Activated naive CD4-positive, alpha-beta T cell treated with anti-CD3 and anti-CD28 coated beads for 36 hours (primary cell): ENCODE measurements at regions of chr15 and their contacts with region 1.

Region 1: GRCh38 chr15:64893481-64894394 is 18.0 kb upstream of the ANKDD1A start:
- DNase-seq: peak; percentile 99
- H3K4me3 Mint-ChIP-seq: peak overlapping the region; percentile 98
- H3K27ac Mint-ChIP-seq: peak overlapping the region; percentile 99
- H3K4me1 Mint-ChIP-seq: peaks cover 62% of the 10 kb centered on the region
- H3K27me3 Mint-ChIP-seq: no peaks in the 10 kb centered on the region

Region 2: GRCh38 chr15:64093627-64094417 is 799.9 kb before region 1 on chr15 and contains the start of gene CIAO2A:
- CTCF ChIA-PET with region 1: no interaction called
- intact Hi-C with region 1: loop called (anchors 5 kb)
- DNase-seq: peak; percentile 99
- H3K4me3 Mint-ChIP-seq: peak within 1 kb of the TSS; percentile 98
- H3K27ac Mint-ChIP-seq: peak within 1 kb of the TSS; percentile 97
- H3K4me1 Mint-ChIP-seq: peaks cover 62% of the 10 kb centered on the region
- H3K27me3 Mint-ChIP-seq: no peaks in the 10 kb centered on the region
- total RNA-seq, gene CIAO2A: 105 TPM

Region 3: DNA sequence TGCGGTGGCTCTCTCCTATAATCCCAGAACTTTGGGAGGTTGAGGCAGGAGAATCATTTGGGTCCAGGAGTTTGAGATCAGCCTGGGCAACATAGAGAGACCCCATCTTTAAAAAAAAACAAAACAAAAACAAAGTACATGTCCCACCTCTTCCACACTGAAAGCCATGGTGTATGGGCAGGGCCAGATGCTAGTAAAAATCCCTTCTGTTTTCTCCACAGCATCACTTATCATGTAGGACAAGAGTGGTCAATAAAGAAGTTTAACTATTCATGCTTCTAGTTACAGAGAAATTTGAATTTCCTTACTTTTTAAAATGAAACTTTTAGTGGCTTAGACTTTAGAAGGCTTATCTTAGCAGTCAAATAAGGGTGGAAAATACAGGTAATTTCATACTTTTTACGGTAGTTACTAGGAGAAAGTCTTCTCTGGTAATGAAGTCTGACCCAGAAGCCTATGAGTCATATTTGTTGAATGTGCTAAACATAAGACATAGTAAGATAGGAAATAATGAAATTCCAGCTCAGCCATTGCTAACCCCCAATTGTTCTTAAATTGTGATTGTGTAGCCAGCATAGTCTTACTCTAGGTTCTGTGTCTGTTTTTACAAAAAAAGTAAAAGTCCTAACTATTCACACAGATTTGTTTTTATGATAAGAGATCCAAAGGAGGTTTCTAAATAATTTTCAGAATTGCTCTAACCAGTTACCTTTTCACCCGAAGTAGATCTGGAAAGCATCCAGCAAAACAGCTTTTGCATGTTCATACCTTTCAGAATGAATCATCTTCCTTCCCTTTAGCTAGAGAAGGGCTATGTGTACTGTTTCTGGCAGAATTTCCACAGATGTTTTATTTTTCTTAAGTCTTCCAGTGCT is 449.8 kb before region 1 on chr15:
- CTCF ChIA-PET with region 1: no interaction called
- intact Hi-C with region 1: loop called (anchors 5 kb)
- DNase-seq: peak; percentile 20
- H3K4me3 Mint-ChIP-seq: peak overlapping the region; percentile 66
- H3K27ac Mint-ChIP-seq: peak overlapping the region; percentile 94
- H3K4me1 Mint-ChIP-seq: peaks cover 62% of the 10 kb centered on the region
- H3K27me3 Mint-ChIP-seq: no peaks in the 10 kb centered on the region

Region 4: GRCh38 chr15:64665179-64665578 is 228.6 kb before region 1 on chr15:
- CTCF ChIA-PET with region 1: no interaction called
- intact Hi-C with region 1: no loop called
- DNase-seq: no peak
- H3K4me3 Mint-ChIP-seq: no peak overlapping the region
- H3K27ac Mint-ChIP-seq: no peak overlapping the region
- H3K4me1 Mint-ChIP-seq: peaks cover 11% of the 10 kb centered on the region
- H3K27me3 Mint-ChIP-seq: no peaks in the 10 kb centered on the region

Region 5: GRCh38 chr15:64731012-64731806 is 162.5 kb before region 1 on chr15:
- CTCF ChIA-PET with region 1: interaction called, 5 read pairs
- intact Hi-C with region 1: loop called (anchors 2 kb)
- DNase-seq: peak; percentile 94
- H3K4me3 Mint-ChIP-seq: no peak overlapping the region
- H3K27ac Mint-ChIP-seq: no peak overlapping the region
- H3K4me1 Mint-ChIP-seq: peaks cover 3% of the 10 kb centered on the region
- H3K27me3 Mint-ChIP-seq: peaks cover 3% of the 10 kb centered on the region

Region 6: DNA sequence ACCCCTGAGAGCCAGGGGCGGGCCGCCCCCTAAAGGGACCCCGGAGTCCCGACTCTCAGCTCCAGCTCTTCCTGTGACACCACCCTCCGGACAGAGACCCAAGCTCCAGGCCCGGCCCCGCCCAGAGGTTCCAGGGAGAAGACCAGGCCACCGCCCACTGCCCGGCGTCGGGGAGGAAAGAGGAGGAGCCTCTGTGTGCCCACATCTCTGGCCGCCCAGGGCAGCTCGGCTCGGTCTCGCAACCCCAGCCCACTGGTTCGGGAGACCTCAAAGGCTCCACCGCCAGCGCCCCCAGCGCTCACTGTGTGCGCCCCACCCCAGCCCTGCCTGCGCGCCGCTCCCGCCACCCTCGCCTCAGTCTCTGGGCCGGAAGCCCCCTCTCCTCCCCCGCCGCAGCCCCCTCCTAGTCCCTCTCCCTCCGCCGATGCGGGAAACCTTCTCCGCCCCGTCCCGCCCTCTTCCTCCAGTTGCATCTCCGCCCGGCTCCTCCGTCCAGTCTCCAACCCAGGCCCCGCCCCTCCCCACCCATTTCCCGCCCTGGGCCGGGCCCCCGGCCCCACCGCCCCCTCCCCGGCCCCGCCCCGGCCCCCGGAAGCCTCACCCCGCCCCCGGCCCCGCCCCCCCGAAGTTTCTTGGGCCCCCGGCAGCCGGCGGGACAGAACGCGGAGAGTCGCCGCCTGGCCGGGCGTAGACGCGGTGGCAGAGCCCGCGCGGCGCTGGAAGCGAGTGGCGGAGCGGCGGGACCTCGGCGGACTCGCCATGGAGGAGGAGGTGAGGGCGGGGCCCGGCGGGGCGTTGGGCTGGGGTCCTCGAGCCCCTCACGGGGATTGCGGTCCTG is 52.3 kb before region 1 on chr15 and contains the start of gene PLEKHO2:
- CTCF ChIA-PET with region 1: interaction called, 17 read pairs
- intact Hi-C with region 1: loop called (anchors 1 kb)
- DNase-seq: peak; percentile 95
- H3K4me3 Mint-ChIP-seq: peak within 1 kb of the TSS; percentile 96
- H3K27ac Mint-ChIP-seq: peak within 1 kb of the TSS; percentile 83
- H3K4me1 Mint-ChIP-seq: peaks cover 60% of the 10 kb centered on the region
- H3K27me3 Mint-ChIP-seq: no peaks in the 10 kb centered on the region
- total RNA-seq, gene PLEKHO2: 12.5 to 12.7 TPM

Region 7: GRCh38 chr15:64912379-64913325 is 18.9 kb after region 1 on chr15:
- CTCF ChIA-PET with region 1: no interaction called
- intact Hi-C with region 1: no loop called
- DNase-seq: no peak
- H3K4me3 Mint-ChIP-seq: peak overlapping the region; percentile 46
- H3K27ac Mint-ChIP-seq: no peak overlapping the region
- H3K4me1 Mint-ChIP-seq: peaks cover 4% of the 10 kb centered on the region
- H3K27me3 Mint-ChIP-seq: peaks cover 7% of the 10 kb centered on the region

Region 8: GRCh38 chr15:64970698-64971097 is 77.0 kb after region 1 on chr15:
- CTCF ChIA-PET with region 1: no interaction called
- intact Hi-C with region 1: no loop called
- DNase-seq: no peak
- H3K4me3 Mint-ChIP-seq: no peak overlapping the region
- H3K27ac Mint-ChIP-seq: no peak overlapping the region
- H3K4me1 Mint-ChIP-seq: no peaks in the 10 kb centered on the region
- H3K27me3 Mint-ChIP-seq: no peaks in the 10 kb centered on the region

Region 9: GRCh38 chr15:65792130-65792987 is 898.6 kb after region 1 on chr15 and contains the start of gene DENND4A:
- CTCF ChIA-PET with region 1: no interaction called
- intact Hi-C with region 1: loop called (anchors 10 kb)
- DNase-seq: peak; percentile 99
- H3K4me3 Mint-ChIP-seq: peak within 1 kb of the TSS; percentile 88
- H3K27ac Mint-ChIP-seq: peak within 1 kb of the TSS; percentile 98
- H3K4me1 Mint-ChIP-seq: peaks cover 58% of the 10 kb centered on the region
- H3K27me3 Mint-ChIP-seq: no peaks in the 10 kb centered on the region
- total RNA-seq, gene DENND4A: 23.9 to 24.9 TPM